CD4-positive, alpha-beta T cell (primary cell): ENCODE measurements at regions of chr10 and their contacts with region 1.

Region 1: GRCh38 chr10:118729641-118730258 is 25.0 kb downstream of the CACUL1 start:
- DNase-seq: peak in 3 of 14 experiments; percentile 59 to 70 (median 62)
- ATAC-seq: peak; percentile 72
- H3K4me3 ChIP-seq: no peak overlapping the region
- H3K4me3 Mint-ChIP-seq: peak overlapping the region; percentile 31
- H3K27ac ChIP-seq: peak overlapping the region in 1 of 2 donors; percentile 14
- H3K27ac Mint-ChIP-seq: peak overlapping the region; percentile 80
- H3K4me1 ChIP-seq: peaks cover 33% of the 10 kb centered on the region
- H3K4me1 Mint-ChIP-seq: peaks cover 74% of the 10 kb centered on the region
- H3K27me3 ChIP-seq: no peaks in the 10 kb centered on the region
- H3K27me3 Mint-ChIP-seq: no peaks in the 10 kb centered on the region
- CTCF ChIP-seq: no peak

Region 2: DNA sequence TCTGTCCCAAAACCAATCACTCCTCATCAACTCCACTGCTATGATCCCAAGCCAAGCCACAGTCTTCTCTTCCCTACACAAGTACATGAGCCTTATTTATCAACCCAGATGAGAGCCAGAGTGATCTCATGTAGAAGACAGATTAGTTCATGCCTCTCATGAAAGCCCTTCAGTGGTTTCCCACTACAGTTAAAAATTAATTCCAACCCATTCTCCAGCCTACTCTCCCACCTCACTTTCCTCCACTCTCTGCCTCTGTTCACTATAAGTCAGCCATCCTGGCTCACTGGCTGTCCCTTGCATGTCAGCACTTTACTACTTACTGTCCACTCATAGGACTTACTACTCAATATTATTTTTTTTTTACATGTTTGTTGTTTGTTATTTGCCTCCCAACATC is 42.3 kb before region 1 on chr10:
- CTCF ChIA-PET with region 1: no interaction called
- POLR2A ChIA-PET with region 1: no interaction called
- intact Hi-C with region 1: no loop called
- DNase-seq: no peak
- ATAC-seq: no peak
- H3K4me3 ChIP-seq: no peak overlapping the region
- H3K4me3 Mint-ChIP-seq: no peak overlapping the region
- H3K27ac ChIP-seq: no peak overlapping the region
- H3K27ac Mint-ChIP-seq: no peak overlapping the region
- H3K4me1 ChIP-seq: no peaks in the 10 kb centered on the region
- H3K4me1 Mint-ChIP-seq: peaks cover 19% of the 10 kb centered on the region
- H3K27me3 ChIP-seq: no peaks in the 10 kb centered on the region
- H3K27me3 Mint-ChIP-seq: no peaks in the 10 kb centered on the region
- CTCF ChIP-seq: no peak

Region 3: DNA sequence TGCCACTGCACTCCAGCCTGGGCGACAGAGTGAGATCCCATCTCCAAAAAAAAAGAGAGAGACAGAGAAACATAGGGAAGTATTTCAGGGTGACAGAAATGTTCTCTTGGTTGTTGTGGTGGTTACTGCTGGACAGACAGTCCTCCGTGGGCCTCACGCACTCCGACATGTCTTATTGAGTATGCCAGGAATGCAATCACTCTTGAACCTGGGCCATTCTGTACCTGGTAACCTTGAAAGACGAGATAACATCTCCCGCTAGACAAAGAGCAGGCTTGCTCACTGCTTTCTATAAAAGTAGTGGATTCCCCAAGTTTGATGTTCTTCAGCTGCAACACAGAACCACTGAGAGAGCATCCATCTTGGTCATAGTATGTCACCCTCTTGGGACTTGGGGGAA is 18.3 kb after region 1 on chr10:
- CTCF ChIA-PET with region 1: no interaction called
- POLR2A ChIA-PET with region 1: interaction called, 92 read pairs
- intact Hi-C with region 1: loop called in 1 of 2 experiments (anchors 2 kb)
- DNase-seq: no peak
- ATAC-seq: no peak
- H3K4me3 ChIP-seq: no peak overlapping the region
- H3K4me3 Mint-ChIP-seq: no peak overlapping the region
- H3K27ac ChIP-seq: no peak overlapping the region
- H3K27ac Mint-ChIP-seq: no peak overlapping the region
- H3K4me1 ChIP-seq: peaks cover 19% of the 10 kb centered on the region
- H3K4me1 Mint-ChIP-seq: peaks cover 80% of the 10 kb centered on the region
- H3K27me3 ChIP-seq: no peaks in the 10 kb centered on the region
- H3K27me3 Mint-ChIP-seq: no peaks in the 10 kb centered on the region
- CTCF ChIP-seq: no peak